ENCODE measurements at regions of chr16 and their contacts with region 1.

Region 1: DNA sequence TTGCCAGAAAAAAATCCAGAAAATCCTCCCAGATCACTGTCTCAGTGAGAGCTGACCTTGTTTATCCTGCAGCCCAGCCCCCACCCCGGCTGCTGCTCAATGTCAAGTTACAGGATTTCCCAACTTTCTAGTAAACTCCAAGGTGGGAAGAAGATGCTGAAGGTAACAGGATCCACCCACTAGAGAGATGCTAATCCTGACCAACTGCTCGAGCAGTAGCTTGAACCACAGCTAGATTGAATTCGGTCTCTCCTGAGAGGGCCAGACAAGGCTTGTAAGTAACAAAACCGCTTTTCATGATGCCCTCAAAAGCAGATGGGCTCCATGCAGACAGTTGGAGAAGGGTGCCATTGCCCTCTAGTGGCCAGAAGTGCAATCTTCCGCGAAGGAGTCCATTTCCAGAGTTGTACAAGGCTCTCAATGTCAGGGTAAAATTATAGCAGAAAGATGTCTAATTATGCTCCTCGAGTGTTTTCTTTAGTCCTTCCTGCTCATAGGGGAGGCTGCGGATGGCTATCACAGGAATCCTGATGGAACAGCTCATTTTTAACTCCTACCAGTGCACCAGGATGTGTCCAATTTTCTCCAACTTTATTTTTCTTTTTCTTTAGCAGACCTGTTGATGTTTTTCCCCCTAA is 3.9 kb downstream of the CDH11 start:
- DNase-seq: peak; percentile 14 to 61
- H3K4me3 ChIP-seq: no peak overlapping the region
- H3K4me1 ChIP-seq: no peaks in the 10 kb centered on the region
- H3K27me3 ChIP-seq: peaks cover 4% of the 10 kb centered on the region; the same call in 1 of the 2 replicates

Region 2: GRCh38 chr16:63461248-63461841 is 1656.6 kb before region 1 on chr16:
- in situ Hi-C with region 1: loop called (anchors 25 kb)
- DNase-seq: peak; percentile 20 to 42
- H3K4me3 ChIP-seq: no peak overlapping the region
- H3K4me1 ChIP-seq: no peaks in the 10 kb centered on the region
- H3K27me3 ChIP-seq: no peaks in the 10 kb centered on the region

Region 3: DNA sequence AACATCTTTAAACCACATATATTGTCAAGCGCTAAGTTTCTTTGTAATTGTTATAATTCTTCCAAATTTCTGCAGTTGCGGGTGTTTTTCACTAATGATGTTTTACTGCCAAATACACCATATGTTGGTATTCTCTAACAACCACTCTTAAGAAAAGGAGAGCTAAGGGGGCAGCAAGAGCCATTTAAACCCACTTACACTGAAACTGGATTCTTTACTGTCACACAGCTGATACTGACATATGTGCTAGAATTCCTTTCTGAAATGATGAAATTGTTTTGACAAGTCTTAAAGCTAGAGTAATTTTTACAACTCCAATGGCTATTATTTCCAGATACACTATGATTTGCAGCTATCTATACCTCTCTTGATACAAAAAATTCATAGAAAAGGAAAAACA is 479.2 kb before region 1 on chr16:
- in situ Hi-C with region 1: no loop called
- DNase-seq: no peak
- H3K4me3 ChIP-seq: no peak overlapping the region
- H3K4me1 ChIP-seq: no peaks in the 10 kb centered on the region
- H3K27me3 ChIP-seq: no peaks in the 10 kb centered on the region

Measured in HAP-1 (cell line).